Spleen (tissue), 13 donors: ENCODE measurements at regions of chr11 and their contacts with region 1.

Region 1: GRCh38 chr11:84558085-84558905 is 1068.8 kb downstream of the DLG2 start:
- DNase-seq: no peak
- H3K4me3 ChIP-seq: no peak overlapping the region
- H3K27ac ChIP-seq: no peak overlapping the region
- H3K4me1 ChIP-seq: no peaks in the 10 kb centered on the region
- H3K27me3 ChIP-seq: no peaks in the 10 kb centered on the region
- CTCF ChIP-seq: peak; percentile 14 to 81 (median 67)
- POLR2A ChIP-seq: no peak

Region 2: GRCh38 chr11:84686716-84687115 is 128.4 kb after region 1 on chr11:
- intact Hi-C with region 1: no loop called
- DNase-seq: no peak
- H3K4me3 ChIP-seq: no peak overlapping the region
- H3K27ac ChIP-seq: no peak overlapping the region
- H3K4me1 ChIP-seq: no peaks in the 10 kb centered on the region
- H3K27me3 ChIP-seq: no peaks in the 10 kb centered on the region
- CTCF ChIP-seq: no peak
- POLR2A ChIP-seq: no peak

Region 3: GRCh38 chr11:84719935-84720577 is 161.8 kb after region 1 on chr11:
- intact Hi-C with region 1: loop called (anchors 5 kb)
- DNase-seq: peak; percentile 76
- H3K4me3 ChIP-seq: peak overlapping the region; percentile 28 to 69 (median 42)
- H3K27ac ChIP-seq: peak overlapping the region in 4 of 8 donors; percentile 50 to 68 (median 58)
- H3K4me1 ChIP-seq: peaks cover 0 to 18% (median 6%) of the 10 kb centered on the region in 6 donors
- H3K27me3 ChIP-seq: peaks cover 0 to 21% (median 2%) of the 10 kb centered on the region in 7 donors
- CTCF ChIP-seq: no peak
- POLR2A ChIP-seq: no peak

Region 4: GRCh38 chr11:85595285-85595884 is 1037.1 kb after region 1 on chr11:
- intact Hi-C with region 1: loop called (anchors 10 kb)
- DNase-seq: no peak
- H3K4me3 ChIP-seq: no peak overlapping the region
- H3K27ac ChIP-seq: no peak overlapping the region
- H3K4me1 ChIP-seq: peaks cover 0 to 8% (median 0%) of the 10 kb centered on the region in 6 donors
- H3K27me3 ChIP-seq: no peaks in the 10 kb centered on the region
- CTCF ChIP-seq: peak; percentile 16 to 63 (median 53)
- POLR2A ChIP-seq: no peak